Activated CD4-positive, alpha-beta memory T cell treated with anti-CD3 and anti-CD28 coated beads, Interleukin-2, amount 10 ng/mL, durations not matched to agents 7 days and 5 days (primary cell): ENCODE measurements at regions of chr15 and their contacts with region 1.

Region 1: DNA sequence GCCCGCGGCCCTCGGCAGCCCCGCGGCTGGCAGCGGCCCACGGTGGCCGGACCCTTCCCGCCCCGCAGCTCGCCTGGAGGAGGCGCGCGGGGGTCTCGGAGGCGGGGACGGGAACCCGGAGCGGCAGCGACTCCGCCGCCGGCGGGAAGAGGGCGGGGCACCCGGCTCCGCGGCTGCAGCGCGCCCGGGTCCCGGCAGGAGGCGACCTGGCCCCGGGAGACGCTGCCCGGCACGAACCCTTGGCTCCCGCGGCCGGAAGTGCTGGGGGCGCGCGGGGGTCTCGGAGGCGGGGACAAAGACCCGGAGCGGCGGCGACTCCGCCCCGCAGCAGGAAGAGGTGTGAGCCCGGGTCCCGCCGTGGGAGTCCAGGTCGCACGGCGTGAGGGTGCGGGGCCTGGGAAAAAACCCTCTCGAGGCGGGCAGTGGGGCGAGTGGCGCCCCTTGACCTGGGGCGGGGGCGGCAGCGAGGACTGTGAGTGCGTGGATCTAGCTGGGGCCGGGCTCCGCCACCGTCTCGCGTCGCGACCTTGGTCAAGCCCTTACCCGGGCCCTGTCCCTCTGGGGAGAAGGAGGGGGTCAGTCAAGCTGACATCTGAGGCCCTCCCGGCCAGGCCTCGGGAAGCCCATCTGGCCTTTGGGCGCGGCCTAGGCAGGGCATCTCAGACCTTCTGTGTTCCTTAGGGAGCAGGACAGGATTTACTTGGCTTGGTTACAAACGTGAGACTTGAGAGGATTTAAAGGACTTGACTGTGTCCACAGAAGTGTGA is at the start of gene CIB2:
- DNase-seq: peak; percentile 81
- H3K4me3 Mint-ChIP-seq: peak within 1 kb of the TSS; percentile 79
- H3K27ac Mint-ChIP-seq: no peak within 1 kb of the TSS
- H3K4me1 Mint-ChIP-seq: peaks cover 23% of the 10 kb centered on the region
- H3K27me3 Mint-ChIP-seq: peaks cover 2% of the 10 kb centered on the region
- total RNA-seq, gene CIB2: 0.91 to 1.1 TPM

Region 2: GRCh38 chr15:77889009-77889806 is 242.3 kb before region 1 on chr15:
- CTCF ChIA-PET with region 1: no interaction called
- POLR2A ChIA-PET with region 1: no interaction called
- DNase-seq: no peak
- H3K4me3 Mint-ChIP-seq: no peak overlapping the region
- H3K27ac Mint-ChIP-seq: no peak overlapping the region
- H3K4me1 Mint-ChIP-seq: no peaks in the 10 kb centered on the region
- H3K27me3 Mint-ChIP-seq: peaks cover 2% of the 10 kb centered on the region

Region 3: GRCh38 chr15:78170848-78171773 is 39.6 kb after region 1 on chr15:
- CTCF ChIA-PET with region 1: interaction called, 16 read pairs
- POLR2A ChIA-PET with region 1: interaction called, 3 read pairs
- DNase-seq: no peak
- H3K4me3 Mint-ChIP-seq: no peak overlapping the region
- H3K27ac Mint-ChIP-seq: peak overlapping the region; percentile 32
- H3K4me1 Mint-ChIP-seq: peaks cover 58% of the 10 kb centered on the region
- H3K27me3 Mint-ChIP-seq: no peaks in the 10 kb centered on the region

Region 4: DNA sequence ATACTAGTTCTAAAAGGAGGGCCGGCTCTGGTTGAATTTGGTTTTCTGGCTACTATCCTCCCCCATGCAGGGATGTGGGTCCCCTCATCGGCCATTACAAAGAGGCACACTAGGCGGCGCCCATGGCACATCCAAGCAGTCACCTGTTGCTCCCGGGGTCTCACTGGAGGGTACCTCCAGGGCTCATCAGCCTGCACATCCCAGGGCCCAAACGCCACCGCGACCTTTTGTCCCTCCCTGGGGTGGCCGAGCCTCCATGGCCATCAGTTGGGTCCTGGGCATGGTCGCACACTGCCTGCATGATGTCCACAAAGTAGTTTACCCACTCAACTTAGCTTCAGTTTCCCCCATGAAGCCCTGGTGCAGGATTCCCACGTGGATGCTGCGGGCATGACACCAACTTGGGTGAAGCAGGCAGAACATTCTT is 46.0 kb after region 1 on chr15:
- CTCF ChIA-PET with region 1: interaction called, 17 read pairs
- POLR2A ChIA-PET with region 1: no interaction called
- DNase-seq: peak; percentile 49
- H3K4me3 Mint-ChIP-seq: no peak overlapping the region
- H3K27ac Mint-ChIP-seq: no peak overlapping the region
- H3K4me1 Mint-ChIP-seq: peaks cover 23% of the 10 kb centered on the region
- H3K27me3 Mint-ChIP-seq: no peaks in the 10 kb centered on the region